Naive thymus-derived CD4-positive, alpha-beta T cell (primary cell): ENCODE measurements at regions of chr3 and their contacts with region 1.

Region 1: GRCh38 chr3:179071550-179072397 is at the start of gene ZMAT3:
- DNase-seq: peak; percentile 72 to 88 (median 83)
- ATAC-seq: peak; percentile 88
- H3K4me3 ChIP-seq: peak within 1 kb of the TSS; percentile 74
- H3K4me3 Mint-ChIP-seq: peak within 1 kb of the TSS; percentile 97 to 100 (median 98)
- H3K27ac ChIP-seq: peak within 1 kb of the TSS; percentile 87
- H3K27ac Mint-ChIP-seq: peak within 1 kb of the TSS; percentile 89 to 98 (median 95)
- H3K4me1 ChIP-seq: peaks cover 13 to 18% of the 10 kb centered on the region in 2 donors
- H3K4me1 Mint-ChIP-seq: peaks cover 24 to 81% (median 59%) of the 10 kb centered on the region in 7 donors
- H3K27me3 ChIP-seq: no peaks in the 10 kb centered on the region
- H3K27me3 Mint-ChIP-seq: no peaks in the 10 kb centered on the region
- total RNA-seq, gene ZMAT3: 20.6 to 23.7 (median 21.7) TPM

Region 2: GRCh38 chr3:179027326-179027900 is 44.4 kb before region 1 on chr3:
- CTCF ChIA-PET with region 1: interaction called, 4 read pairs
- POLR2A ChIA-PET with region 1: interaction called, 11 read pairs
- intact Hi-C with region 1: no loop called
- DNase-seq: peak in 7 of 9 donors; percentile 20 to 47 (median 31)
- ATAC-seq: peak; percentile 72
- H3K4me3 ChIP-seq: no peak overlapping the region
- H3K4me3 Mint-ChIP-seq: peak overlapping the region; percentile 47 to 86 (median 72)
- H3K27ac ChIP-seq: peak overlapping the region; percentile 58
- H3K27ac Mint-ChIP-seq: peak overlapping the region; percentile 76 to 97 (median 94)
- H3K4me1 ChIP-seq: peaks cover 0 to 26% of the 10 kb centered on the region in 2 donors
- H3K4me1 Mint-ChIP-seq: peaks cover 4 to 61% (median 42%) of the 10 kb centered on the region in 7 donors
- H3K27me3 ChIP-seq: no peaks in the 10 kb centered on the region
- H3K27me3 Mint-ChIP-seq: no peaks in the 10 kb centered on the region

Region 3: DNA sequence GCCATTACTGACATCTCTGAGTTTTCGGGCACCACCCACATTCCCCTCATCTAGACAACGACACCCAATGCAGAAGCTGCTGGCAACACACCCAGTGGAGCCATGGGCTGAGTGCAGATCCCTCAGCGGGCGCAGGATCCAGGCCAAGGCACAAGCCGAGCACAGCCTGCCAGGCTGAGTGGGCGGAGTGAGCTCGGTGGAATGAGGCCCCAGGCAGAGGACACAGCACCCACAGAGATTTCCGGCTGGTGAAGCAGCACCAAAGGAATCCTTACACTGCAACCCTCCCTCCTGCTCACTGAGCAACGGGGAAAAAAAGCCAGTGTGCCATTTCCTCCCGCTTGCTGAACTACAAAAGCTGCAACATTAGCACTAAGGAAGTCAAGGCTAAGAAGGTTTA is 34.4 kb before region 1 on chr3:
- CTCF ChIA-PET with region 1: interaction called, 4 read pairs
- POLR2A ChIA-PET with region 1: interaction called, 41 read pairs
- intact Hi-C with region 1: loop called (anchors 1 to 2 kb)
- DNase-seq: peak in 8 of 9 donors; percentile 62 to 81 (median 76)
- ATAC-seq: peak; percentile 95
- H3K4me3 ChIP-seq: peak overlapping the region; percentile 44
- H3K4me3 Mint-ChIP-seq: peak overlapping the region in 4 of 10 donors; percentile 55 to 79 (median 70)
- H3K27ac ChIP-seq: peak overlapping the region; percentile 69
- H3K27ac Mint-ChIP-seq: peak overlapping the region in 1 of 9 donors; percentile 79
- H3K4me1 ChIP-seq: peaks cover 11 to 33% of the 10 kb centered on the region in 2 donors
- H3K4me1 Mint-ChIP-seq: peaks cover 9 to 19% (median 17%) of the 10 kb centered on the region in 7 donors
- H3K27me3 ChIP-seq: no peaks in the 10 kb centered on the region
- H3K27me3 Mint-ChIP-seq: no peaks in the 10 kb centered on the region

Region 4: DNA sequence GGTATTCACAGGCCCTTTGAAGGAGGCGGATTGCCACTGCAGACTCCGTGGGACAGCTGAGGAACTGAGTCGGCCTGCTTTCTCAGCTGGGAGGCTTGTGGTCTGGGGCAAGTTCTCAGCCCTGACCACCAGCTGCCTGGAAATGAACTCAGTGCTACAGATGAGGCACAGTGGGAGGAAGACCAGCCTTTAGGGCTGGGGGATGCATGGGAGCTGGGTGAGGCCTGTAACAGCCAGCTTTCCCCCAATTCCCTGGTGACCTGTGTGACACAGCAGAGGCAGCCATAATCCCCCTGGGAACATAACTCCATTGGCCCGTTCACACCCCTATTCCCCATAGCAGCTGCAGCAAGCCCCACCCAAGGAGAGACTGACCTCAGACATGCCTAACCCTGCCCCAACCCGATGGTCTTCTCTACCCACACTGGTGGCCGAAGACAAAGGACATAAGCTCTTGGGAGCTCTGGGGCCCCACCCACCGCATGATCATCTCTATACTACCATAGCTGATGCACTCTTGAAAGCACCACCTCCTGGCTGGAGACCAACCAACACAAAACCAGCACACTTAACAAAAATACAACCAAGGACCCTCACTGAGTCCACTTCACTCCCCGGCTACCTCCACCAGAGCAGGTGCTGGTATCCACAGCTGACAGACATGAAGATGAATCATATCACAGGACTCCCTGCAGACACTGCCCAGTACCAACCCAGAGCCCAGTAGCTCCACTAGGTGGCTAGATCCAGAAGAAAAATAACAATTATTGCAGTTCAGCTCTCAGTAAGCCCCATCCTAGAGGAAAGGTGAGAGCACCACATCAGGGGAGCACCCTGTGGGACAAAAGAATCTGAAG is 25.0 kb before region 1 on chr3:
- CTCF ChIA-PET with region 1: no interaction called
- POLR2A ChIA-PET with region 1: interaction called, 16 read pairs
- intact Hi-C with region 1: loop called in 1 of 2 experiments (anchors 2 kb)
- DNase-seq: no peak
- ATAC-seq: no peak
- H3K4me3 ChIP-seq: no peak overlapping the region
- H3K4me3 Mint-ChIP-seq: peak overlapping the region in 5 of 10 donors; percentile 5 to 44 (median 14)
- H3K27ac ChIP-seq: no peak overlapping the region
- H3K27ac Mint-ChIP-seq: peak overlapping the region in 7 of 9 donors; percentile 17 to 86 (median 58)
- H3K4me1 ChIP-seq: peaks cover 0 to 11% of the 10 kb centered on the region in 2 donors
- H3K4me1 Mint-ChIP-seq: peaks cover 33 to 80% (median 70%) of the 10 kb centered on the region in 7 donors
- H3K27me3 ChIP-seq: no peaks in the 10 kb centered on the region
- H3K27me3 Mint-ChIP-seq: no peaks in the 10 kb centered on the region

Region 5: DNA sequence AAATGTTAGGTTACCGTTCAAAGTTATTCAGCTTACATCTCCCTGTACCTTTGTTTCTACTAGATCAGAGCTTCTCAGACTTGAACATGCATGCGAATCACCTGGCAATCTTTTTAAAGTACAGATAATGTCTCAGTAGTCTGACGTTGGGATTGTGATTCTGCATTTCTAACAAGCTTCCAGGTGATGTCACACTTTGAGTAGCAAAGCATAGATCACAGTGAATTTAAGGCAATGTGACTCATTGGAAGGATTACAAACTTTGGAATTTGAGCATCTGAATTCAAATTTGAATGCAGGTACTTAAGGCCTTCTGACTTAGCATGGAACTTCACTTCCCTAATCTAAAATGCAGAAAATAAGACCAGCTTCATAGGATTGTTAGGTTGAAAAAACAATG is 10.6 kb after region 1 on chr3:
- CTCF ChIA-PET with region 1: no interaction called
- POLR2A ChIA-PET with region 1: interaction called, 4 read pairs
- intact Hi-C with region 1: loop called in 1 of 2 experiments (anchors 1 kb)
- DNase-seq: no peak
- ATAC-seq: no peak
- H3K4me3 ChIP-seq: no peak overlapping the region
- H3K4me3 Mint-ChIP-seq: no peak overlapping the region
- H3K27ac ChIP-seq: no peak overlapping the region
- H3K27ac Mint-ChIP-seq: no peak overlapping the region
- H3K4me1 ChIP-seq: no peaks in the 10 kb centered on the region
- H3K4me1 Mint-ChIP-seq: peaks cover 6 to 18% (median 10%) of the 10 kb centered on the region in 7 donors
- H3K27me3 ChIP-seq: no peaks in the 10 kb centered on the region
- H3K27me3 Mint-ChIP-seq: no peaks in the 10 kb centered on the region

Region 6: GRCh38 chr3:179136195-179136594 is 64.4 kb after region 1 on chr3:
- CTCF ChIA-PET with region 1: no interaction called
- POLR2A ChIA-PET with region 1: no interaction called
- intact Hi-C with region 1: no loop called
- DNase-seq: no peak
- ATAC-seq: no peak
- H3K4me3 ChIP-seq: no peak overlapping the region
- H3K4me3 Mint-ChIP-seq: no peak overlapping the region
- H3K27ac ChIP-seq: no peak overlapping the region
- H3K27ac Mint-ChIP-seq: no peak overlapping the region
- H3K4me1 ChIP-seq: no peaks in the 10 kb centered on the region
- H3K4me1 Mint-ChIP-seq: peaks cover 0 to 7% (median 0%) of the 10 kb centered on the region in 7 donors
- H3K27me3 ChIP-seq: no peaks in the 10 kb centered on the region
- H3K27me3 Mint-ChIP-seq: peaks cover 0 to 34% (median 3%) of the 10 kb centered on the region in 5 donors

Region 7: DNA sequence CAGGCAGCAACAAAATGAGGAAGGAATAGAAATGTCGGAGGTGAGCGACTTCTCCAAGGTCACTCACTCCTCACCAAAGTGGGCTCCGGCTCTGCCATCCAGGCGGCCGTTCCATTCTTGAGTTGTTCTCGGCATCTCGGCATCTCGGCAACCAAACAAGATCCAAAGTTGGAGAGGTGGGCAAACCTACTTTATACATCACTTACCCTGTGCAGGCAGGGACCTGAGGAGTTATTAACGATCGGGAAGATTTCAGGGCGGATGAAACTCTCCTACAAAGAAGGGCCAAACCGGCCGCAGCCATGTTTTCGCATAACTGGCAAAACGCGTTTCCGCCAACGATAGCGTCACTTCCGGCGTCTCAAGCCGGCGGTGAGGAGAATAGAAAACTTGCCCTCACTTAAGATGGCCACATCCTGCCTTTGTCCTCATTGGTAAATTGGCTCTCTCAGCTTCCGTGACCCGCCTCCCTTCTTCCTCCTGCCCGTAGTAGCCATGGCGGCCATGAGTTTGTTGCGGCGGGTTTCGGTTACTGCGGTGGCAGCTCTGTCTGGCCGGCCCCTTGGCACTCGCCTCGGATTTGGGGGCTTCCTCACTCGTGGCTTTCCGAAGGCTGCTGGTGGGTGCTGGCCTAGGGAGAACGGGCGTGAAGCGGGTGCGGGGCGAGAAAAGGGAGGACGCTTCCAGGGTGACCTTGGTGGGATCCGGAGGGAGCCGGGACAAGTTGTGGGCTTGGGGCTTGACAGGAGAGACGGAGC is 532.7 kb after region 1 on chr3 and contains the starts of genes MRPL47 and NDUFB5:
- CTCF ChIA-PET with region 1: interaction called, 3 read pairs
- POLR2A ChIA-PET with region 1: no interaction called
- intact Hi-C with region 1: loop called in 1 of 2 experiments (anchors 2 kb)
- DNase-seq: peak; percentile 76 to 95 (median 92)
- ATAC-seq: peak; percentile 100
- H3K4me3 ChIP-seq: peak within 1 kb of the TSS; percentile 95
- H3K4me3 Mint-ChIP-seq: peak within 1 kb of the TSS; percentile 95 to 99 (median 99)
- H3K27ac ChIP-seq: peak within 1 kb of the TSS; percentile 90
- H3K27ac Mint-ChIP-seq: peak within 1 kb of the TSS; percentile 98 to 100 (median 99)
- H3K4me1 ChIP-seq: peaks cover 15 to 25% of the 10 kb centered on the region in 2 donors
- H3K4me1 Mint-ChIP-seq: peaks cover 23 to 65% (median 46%) of the 10 kb centered on the region in 7 donors
- H3K27me3 ChIP-seq: no peaks in the 10 kb centered on the region
- H3K27me3 Mint-ChIP-seq: no peaks in the 10 kb centered on the region
- total RNA-seq, gene MRPL47: 14.4 to 41.4 (median 18.5) TPM
- total RNA-seq, gene NDUFB5: 33.4 to 80.2 (median 62.8) TPM

Region 8: DNA sequence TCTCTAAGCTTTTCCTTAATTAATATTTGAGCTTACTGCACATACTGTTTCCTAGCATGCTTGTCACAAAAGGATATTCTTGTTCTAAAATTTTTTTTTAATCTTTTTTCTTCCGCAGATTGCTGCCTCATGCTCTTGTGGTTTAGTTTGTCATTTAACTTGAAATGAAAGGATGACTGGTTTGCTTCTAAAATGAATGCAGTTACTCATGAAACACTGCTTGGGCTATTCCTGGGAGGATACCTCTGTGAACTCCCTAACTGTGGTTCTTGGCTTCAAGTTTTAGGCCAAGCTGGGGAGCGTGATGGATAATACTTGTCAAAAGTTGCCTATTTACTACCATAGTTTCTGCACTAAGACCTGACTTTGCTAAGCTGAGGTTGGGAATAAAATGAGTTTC is 645.0 kb after region 1 on chr3:
- CTCF ChIA-PET with region 1: no interaction called
- POLR2A ChIA-PET with region 1: no interaction called
- intact Hi-C with region 1: no loop called
- DNase-seq: no peak
- ATAC-seq: no peak
- H3K4me3 ChIP-seq: no peak overlapping the region
- H3K4me3 Mint-ChIP-seq: no peak overlapping the region
- H3K27ac ChIP-seq: no peak overlapping the region
- H3K27ac Mint-ChIP-seq: peak overlapping the region in 1 of 9 donors; percentile 38
- H3K4me1 ChIP-seq: no peaks in the 10 kb centered on the region
- H3K4me1 Mint-ChIP-seq: no peaks in the 10 kb centered on the region
- H3K27me3 ChIP-seq: no peaks in the 10 kb centered on the region
- H3K27me3 Mint-ChIP-seq: no peaks in the 10 kb centered on the region